Vagina (tissue), 2 donors: ENCODE measurements at regions of chr22 and their contacts with region 1.

Region 1: GRCh38 chr22:38181453-38182247 is at the start of gene PLA2G6:
- DNase-seq: peak; percentile 99
- H3K4me3 ChIP-seq: peak within 1 kb of the TSS; percentile 63 to 69
- H3K27ac ChIP-seq: peak within 1 kb of the TSS; percentile 99
- H3K4me1 ChIP-seq: peaks cover 43% of the 10 kb centered on the region
- H3K27me3 ChIP-seq: no peaks in the 10 kb centered on the region
- CTCF ChIP-seq: peak in 1 of 3 experiments; percentile 19
- POLR2A ChIP-seq: no peak
- total RNA-seq, gene PLA2G6: 35.8 TPM

Region 2: DNA sequence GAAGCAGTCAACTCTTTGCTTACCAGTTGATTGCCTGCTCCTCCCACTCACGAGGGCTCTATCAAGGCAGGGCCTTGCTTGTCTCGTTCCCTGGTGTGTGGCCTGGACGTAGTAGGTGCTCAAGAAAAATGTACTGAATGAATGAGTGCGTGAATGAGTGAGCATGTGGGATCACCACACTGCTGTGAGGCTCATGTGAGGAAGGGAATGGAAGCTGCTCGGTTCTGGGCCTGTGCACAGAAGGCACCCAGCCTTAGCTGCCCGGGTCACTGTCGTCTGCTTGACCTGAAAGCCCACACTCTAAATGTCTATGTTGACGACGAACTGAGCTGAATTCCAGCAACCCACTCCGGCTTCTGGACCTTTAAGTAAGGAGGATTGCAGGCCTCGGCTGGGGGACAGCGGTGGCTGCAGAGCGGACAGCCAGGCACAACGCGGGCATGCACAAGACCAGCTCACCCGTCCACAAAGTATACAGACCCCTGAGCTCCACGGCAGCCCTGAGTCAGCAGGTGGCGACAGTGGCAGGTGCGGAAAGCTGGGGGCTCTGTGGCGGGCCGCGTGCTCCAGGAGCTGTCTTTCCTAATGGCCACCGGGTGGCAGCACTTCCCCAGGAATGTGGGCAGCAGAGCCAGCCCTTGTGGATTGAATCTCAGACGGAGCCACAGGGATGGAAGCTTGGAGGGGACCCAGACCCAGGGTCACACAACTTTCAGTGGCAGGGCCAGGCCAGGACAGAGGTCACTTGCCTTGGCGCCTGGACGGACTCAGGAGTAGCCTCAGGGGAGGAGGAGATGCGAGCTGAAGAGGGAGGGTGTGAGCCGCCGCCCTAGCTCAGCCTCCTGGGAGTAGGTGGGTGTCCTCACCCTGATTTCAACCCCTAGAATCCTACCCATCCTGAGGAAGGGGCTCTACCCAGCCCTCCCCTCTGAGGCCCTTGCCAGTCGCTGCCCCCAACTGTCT is 129.5 kb before region 1 on chr22:
- intact Hi-C with region 1: no loop called
- DNase-seq: no peak
- H3K4me3 ChIP-seq: no peak overlapping the region
- H3K27ac ChIP-seq: no peak overlapping the region
- H3K4me1 ChIP-seq: peaks cover 6% of the 10 kb centered on the region
- H3K27me3 ChIP-seq: no peaks in the 10 kb centered on the region
- CTCF ChIP-seq: peak; percentile 87 to 90 (median 89)
- POLR2A ChIP-seq: no peak

Region 3: DNA sequence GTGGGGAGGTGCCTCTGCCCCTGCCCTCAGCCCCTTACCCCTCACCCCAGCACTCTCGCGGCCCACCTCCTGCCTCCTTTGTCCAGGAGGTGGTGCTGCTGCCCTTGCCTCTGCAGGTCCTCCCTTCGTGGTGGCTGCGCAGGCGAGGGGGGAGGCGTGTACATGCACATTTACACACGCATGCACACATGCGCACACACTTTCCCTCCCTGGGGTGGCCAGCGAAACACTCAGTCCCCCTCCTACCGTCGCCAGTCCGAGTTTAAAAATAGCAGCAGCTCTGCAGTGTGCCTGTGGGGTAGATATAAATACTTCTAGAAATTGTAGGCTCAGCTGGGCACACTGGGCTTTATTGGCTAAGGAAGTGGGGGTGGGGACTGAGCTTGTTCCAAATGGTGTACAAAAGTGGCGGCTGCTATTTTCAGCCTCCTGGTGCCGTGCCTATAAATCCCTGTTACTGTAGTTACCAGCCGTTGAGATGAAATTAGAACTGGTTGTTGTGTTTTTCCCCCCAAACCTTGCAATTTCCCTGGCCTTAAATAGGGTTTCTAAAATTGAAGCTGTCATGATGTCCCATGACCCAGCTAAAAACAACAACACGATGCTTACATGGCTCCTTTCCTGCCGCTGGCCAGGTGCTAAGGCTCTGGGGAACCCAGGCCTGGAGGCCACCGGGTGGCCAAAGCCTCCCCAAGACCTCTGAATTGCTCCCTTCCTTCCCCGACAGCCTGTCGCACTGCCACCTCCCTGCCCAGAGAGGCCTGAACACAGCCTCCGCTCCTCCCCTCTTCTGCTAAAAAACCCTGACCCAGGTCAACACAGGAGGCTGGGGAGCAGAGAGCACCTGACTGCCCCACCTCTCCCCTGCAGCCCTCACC is 112.0 kb before region 1 on chr22:
- intact Hi-C with region 1: loop called (anchors 10 kb)
- DNase-seq: no peak
- H3K4me3 ChIP-seq: no peak overlapping the region
- H3K27ac ChIP-seq: peak overlapping the region; percentile 85
- H3K4me1 ChIP-seq: peaks cover 9% of the 10 kb centered on the region
- H3K27me3 ChIP-seq: no peaks in the 10 kb centered on the region
- CTCF ChIP-seq: peak in 1 of 3 experiments; percentile 12
- POLR2A ChIP-seq: no peak

Region 4: DNA sequence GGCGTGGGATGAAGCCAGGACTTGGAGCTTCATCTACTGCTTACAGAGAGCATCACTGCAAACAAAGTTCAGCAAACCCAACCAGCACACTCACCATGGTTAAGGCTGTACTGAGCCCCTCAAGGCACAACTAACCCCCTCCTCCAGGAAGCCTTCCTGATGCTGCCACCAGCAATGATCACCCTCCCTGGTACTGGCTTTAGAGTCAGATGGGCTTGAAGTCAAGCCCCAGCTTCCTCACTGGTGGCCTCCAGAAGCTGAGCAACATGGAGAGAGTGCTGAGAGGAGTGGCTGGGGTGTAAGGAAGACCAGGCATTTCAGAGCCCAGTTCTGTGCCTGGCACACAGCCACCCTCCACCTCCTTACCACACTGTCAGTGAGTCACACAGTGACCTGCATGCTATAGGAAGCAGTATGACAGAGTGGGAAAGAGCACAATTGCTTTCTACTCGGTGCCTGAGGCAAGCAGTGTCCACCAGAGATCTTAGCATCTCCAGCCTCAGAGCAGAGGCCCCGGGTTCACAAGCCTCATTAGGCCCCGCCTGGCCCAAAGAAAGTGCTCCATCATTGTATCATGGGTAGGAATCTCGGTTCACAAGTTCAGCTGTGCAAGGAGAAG is 46.4 kb before region 1 on chr22:
- intact Hi-C with region 1: no loop called
- DNase-seq: no peak
- H3K4me3 ChIP-seq: no peak overlapping the region
- H3K27ac ChIP-seq: no peak overlapping the region
- H3K4me1 ChIP-seq: no peaks in the 10 kb centered on the region
- H3K27me3 ChIP-seq: no peaks in the 10 kb centered on the region
- CTCF ChIP-seq: no peak
- POLR2A ChIP-seq: no peak